Right cardiac atrium (tissue), 5 donors: ENCODE measurements at regions of chr17 and their contacts with region 1.

Region 1: GRCh38 chr17:47789611-47790561 is 31.7 kb downstream of the OSBPL7 start:
- DNase-seq: peak; percentile 60 to 82 (median 75)
- ATAC-seq: peak; percentile 92 to 97
- H3K4me3 ChIP-seq: peak overlapping the region; percentile 34
- H3K27ac ChIP-seq: no peak overlapping the region
- H3K4me1 ChIP-seq: no peaks in the 10 kb centered on the region
- H3K27me3 ChIP-seq: no peaks in the 10 kb centered on the region

Region 2: DNA sequence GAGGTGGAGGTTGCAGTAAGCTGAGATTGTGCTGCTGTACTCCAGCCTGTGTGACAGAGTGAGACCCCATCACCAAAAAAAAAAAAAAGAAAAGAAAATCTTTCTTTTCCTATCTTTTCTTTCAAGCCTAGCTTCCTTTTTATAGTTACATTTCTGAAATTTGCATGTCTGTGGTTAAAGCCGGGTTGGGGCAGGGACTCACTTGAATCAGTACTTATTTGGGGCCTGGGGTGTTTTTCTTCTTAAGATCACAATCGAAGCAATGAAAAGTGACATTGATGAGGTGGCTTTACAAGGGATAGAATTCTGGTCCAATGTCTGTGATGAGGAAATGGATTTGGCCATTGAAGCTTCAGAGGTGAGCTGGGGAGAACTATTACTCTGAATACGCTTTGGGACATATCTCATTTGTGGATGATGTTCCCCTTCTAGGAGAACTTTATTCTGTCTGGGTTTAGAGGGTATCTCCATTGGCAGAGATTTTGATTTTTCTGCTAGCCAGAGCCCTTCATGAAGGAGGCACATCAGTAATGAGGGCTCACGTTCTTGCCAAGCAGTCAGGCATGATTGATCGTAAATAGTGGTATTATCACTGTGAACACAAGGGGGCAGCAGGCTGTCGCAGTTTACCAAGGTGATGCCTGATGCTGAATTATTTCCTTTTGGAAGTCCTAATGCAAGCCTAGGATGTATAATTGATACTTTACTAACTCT is 125.8 kb before region 1 on chr17:
- intact Hi-C with region 1: loop called in 1 of 4 experiments (anchors 10 kb)
- DNase-seq: peak in 1 of 3 donors; percentile 27
- ATAC-seq: peak; percentile 56 to 73
- H3K4me3 ChIP-seq: no peak overlapping the region
- H3K27ac ChIP-seq: no peak overlapping the region
- H3K4me1 ChIP-seq: no peaks in the 10 kb centered on the region
- H3K27me3 ChIP-seq: no peaks in the 10 kb centered on the region

Region 3: DNA sequence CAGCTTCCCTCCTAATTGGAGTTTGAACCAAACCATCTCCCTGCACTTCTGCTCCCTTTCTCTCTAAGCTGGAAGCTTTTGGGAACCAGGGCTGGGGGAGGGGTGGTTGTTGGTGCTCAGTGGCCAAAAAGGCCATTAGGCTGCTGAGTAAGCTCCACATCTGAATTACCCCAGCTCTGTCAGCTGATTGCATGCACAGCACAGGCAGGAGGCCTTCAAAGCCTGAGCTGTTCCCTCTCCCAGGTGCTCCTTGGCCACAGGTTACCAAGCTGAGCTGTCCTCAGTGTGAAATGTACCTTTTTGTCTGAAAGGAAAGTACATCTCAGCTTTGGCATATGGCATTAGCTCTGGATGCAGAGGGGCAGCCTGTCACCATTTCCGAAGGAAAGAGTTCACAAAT is 102.1 kb before region 1 on chr17:
- intact Hi-C with region 1: no loop called
- DNase-seq: no peak
- ATAC-seq: peak in 1 of 2 donors; percentile 24
- H3K4me3 ChIP-seq: no peak overlapping the region
- H3K27ac ChIP-seq: no peak overlapping the region
- H3K4me1 ChIP-seq: no peaks in the 10 kb centered on the region
- H3K27me3 ChIP-seq: no peaks in the 10 kb centered on the region

Region 4: GRCh38 chr17:47708863-47709541 is 80.9 kb before region 1 on chr17:
- intact Hi-C with region 1: loop called in 1 of 4 experiments (anchors 10 kb)
- DNase-seq: peak; percentile 59 to 88 (median 87)
- ATAC-seq: peak; percentile 57 to 84
- H3K4me3 ChIP-seq: peak overlapping the region; percentile 36
- H3K27ac ChIP-seq: no peak overlapping the region
- H3K4me1 ChIP-seq: peaks cover 16% of the 10 kb centered on the region
- H3K27me3 ChIP-seq: no peaks in the 10 kb centered on the region